ENCODE measurements at regions of chr21 and their contacts with region 1.

Region 1: DNA sequence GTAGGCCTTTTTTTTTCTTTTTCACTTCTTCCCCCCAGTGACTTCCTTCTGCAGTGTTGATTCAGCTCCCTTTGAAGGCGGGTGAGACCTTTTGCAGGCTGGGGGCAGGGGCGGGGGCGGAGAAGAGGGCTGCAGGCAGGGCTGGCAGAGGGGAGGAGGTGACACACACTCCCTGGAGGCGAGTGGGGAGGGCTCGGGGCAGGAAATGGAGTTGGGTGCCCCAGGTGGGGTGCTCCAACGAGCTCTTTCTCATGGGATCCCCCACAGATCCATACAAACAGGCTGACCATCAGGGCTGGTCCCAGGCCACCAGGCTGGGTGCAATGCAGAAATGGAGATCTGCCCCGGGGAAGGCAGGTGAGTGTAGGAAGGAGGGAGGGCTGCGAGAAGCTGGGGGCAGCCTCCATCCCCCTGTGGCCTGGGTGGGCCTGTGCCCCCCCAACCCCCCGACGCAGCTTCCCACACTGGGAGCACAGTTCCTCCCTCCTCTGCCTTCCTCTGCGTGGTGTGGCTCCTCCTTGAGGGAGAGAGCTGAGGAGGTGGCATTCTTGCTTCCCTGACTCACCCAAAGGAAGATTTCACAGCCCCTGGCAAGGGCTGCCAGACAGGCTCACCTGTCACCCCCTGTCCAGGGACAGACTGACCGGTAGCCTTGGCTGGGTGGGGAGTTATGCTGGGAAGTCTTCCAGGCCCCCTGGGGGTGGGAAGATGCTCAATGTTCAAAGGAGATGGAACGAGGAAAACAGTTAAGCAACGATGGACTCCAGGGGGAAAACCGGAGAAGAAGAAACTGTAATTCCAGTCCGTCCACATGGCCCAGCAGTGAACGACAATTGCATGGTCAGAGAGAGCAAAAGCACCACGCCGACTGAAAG is 7.1 kb upstream of the ITGB2 start:
- DNase-seq: peak; percentile 96
- H3K4me3 Mint-ChIP-seq: peak overlapping the region; percentile 85
- H3K27ac Mint-ChIP-seq: peak overlapping the region; percentile 96
- H3K4me1 Mint-ChIP-seq: peaks cover 74% of the 10 kb centered on the region
- H3K27me3 Mint-ChIP-seq: no peaks in the 10 kb centered on the region

Region 2: GRCh38 chr21:44817506-44817880 is 110.3 kb before region 1 on chr21:
- CTCF ChIA-PET with region 1: interaction called, 3 read pairs
- POLR2A ChIA-PET with region 1: no interaction called
- intact Hi-C with region 1: loop called (anchors 5 kb)
- DNase-seq: peak; percentile 95
- H3K4me3 Mint-ChIP-seq: peak overlapping the region; percentile 72
- H3K27ac Mint-ChIP-seq: peak overlapping the region; percentile 33
- H3K4me1 Mint-ChIP-seq: peaks cover 11% of the 10 kb centered on the region
- H3K27me3 Mint-ChIP-seq: no peaks in the 10 kb centered on the region

Region 3: GRCh38 chr21:44892536-44893277 is 35.1 kb before region 1 on chr21:
- CTCF ChIA-PET with region 1: interaction called, 76 read pairs
- POLR2A ChIA-PET with region 1: interaction called, 9 read pairs
- intact Hi-C with region 1: loop called (anchors 1 kb)
- DNase-seq: peak; percentile 86
- H3K4me3 Mint-ChIP-seq: no peak overlapping the region
- H3K27ac Mint-ChIP-seq: peak overlapping the region; percentile 54
- H3K4me1 Mint-ChIP-seq: peaks cover 13% of the 10 kb centered on the region
- H3K27me3 Mint-ChIP-seq: no peaks in the 10 kb centered on the region

Region 4: DNA sequence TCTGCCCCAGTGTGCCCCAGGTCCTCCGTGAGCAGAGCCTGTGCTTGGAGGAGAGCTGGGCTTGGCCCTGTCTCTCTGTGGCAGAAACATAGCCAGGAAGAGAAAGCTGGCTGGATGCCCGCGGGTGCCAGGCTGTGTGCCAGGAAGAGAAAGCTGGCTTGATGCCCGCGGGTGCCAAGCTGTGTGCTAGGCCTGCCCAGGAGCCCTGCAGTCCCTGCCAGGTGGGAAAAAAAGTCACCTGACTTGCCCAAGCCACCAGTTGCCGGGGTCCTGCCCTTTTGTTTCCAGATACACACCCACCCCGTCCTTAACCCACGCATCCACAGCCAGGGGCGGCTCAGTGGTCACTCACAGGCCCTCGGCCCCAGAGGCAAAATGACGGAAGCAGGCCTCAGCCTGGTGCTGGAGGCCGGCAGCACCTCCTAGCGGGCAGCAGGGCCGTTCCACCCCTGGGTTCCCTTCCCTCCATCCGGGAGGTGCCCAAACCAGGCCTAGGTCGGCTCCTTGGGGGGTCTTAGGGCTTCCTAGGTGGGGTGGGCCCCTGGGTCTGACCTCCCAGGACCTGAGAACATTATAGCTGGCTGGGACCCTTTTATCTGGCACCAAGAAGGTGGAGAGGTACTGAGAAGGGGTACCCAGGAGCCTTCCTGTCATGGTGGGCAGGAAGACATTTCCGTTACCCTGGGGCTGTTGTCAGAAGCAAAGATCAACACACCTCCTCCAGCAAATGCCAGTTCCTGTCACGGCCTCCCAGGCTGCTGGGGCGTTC is 16.3 kb before region 1 on chr21:
- CTCF ChIA-PET with region 1: interaction called, 42 read pairs
- POLR2A ChIA-PET with region 1: interaction called, 36 read pairs
- intact Hi-C with region 1: loop called (anchors 1 kb)
- DNase-seq: peak; percentile 75
- H3K4me3 Mint-ChIP-seq: peak overlapping the region; percentile 58
- H3K27ac Mint-ChIP-seq: peak overlapping the region; percentile 93
- H3K4me1 Mint-ChIP-seq: peaks cover 60% of the 10 kb centered on the region
- H3K27me3 Mint-ChIP-seq: no peaks in the 10 kb centered on the region

Region 5: GRCh38 chr21:44939532-44940115 is 11.8 kb after region 1 on chr21 and contains the start of gene SLX9:
- CTCF ChIA-PET with region 1: interaction called, 6 read pairs
- POLR2A ChIA-PET with region 1: interaction called, 13 read pairs
- intact Hi-C with region 1: no loop called
- DNase-seq: peak; percentile 88
- H3K4me3 Mint-ChIP-seq: peak within 1 kb of the TSS; percentile 82
- H3K27ac Mint-ChIP-seq: peak within 1 kb of the TSS; percentile 79
- H3K4me1 Mint-ChIP-seq: peaks cover 36% of the 10 kb centered on the region
- H3K27me3 Mint-ChIP-seq: no peaks in the 10 kb centered on the region
- total RNA-seq, gene SLX9: 60.7 to 64.6 TPM

Region 6: DNA sequence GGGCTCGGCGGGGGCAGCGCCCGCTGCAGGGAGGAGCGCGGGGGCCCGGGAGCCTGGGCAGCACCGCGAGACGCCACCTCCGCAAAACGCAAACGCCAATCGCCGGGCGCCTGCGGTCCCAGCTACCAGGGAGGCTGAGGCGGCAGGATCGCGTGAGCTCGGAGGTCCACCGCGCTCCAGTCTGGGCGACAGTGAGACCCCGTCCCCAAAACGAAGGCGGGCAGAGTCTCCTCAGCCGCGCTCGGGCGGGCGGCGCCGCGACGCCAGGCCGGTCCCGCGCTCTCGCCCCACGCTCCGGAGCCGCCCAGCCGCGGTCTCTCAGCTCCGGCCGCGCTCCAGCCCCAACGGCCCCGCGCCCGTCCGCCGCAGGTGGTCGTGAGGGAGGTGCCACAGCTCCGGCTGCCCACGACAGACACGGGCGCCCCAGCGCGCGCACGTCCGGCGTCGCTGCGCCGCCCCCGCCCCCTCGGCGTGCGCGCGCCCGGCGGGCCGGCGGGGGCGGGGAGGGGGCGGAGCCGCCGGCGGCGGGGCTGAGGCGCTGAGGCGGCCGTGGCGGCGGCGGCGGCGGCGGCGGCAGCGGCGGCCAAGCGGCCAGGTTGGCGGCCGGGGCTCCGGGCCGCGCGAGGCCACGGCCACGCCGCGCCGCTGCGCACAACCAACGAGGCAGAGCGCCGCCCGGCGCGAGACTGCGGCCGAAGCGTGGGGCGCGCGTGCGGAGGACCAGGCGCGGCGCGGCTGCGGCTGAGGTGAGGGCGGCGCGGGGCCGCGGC is 146.4 kb after region 1 on chr21 and contains the start of gene ADARB1:
- CTCF ChIA-PET with region 1: no interaction called
- POLR2A ChIA-PET with region 1: interaction called, 4 read pairs
- intact Hi-C with region 1: loop called (anchors 2 kb)
- DNase-seq: peak; percentile 64
- H3K4me3 Mint-ChIP-seq: peak within 1 kb of the TSS; percentile 84
- H3K27ac Mint-ChIP-seq: peak within 1 kb of the TSS; percentile 75
- H3K4me1 Mint-ChIP-seq: peaks cover 43% of the 10 kb centered on the region
- H3K27me3 Mint-ChIP-seq: no peaks in the 10 kb centered on the region
- total RNA-seq, gene ADARB1: 37.6 to 40.6 TPM

Region 7: GRCh38 chr21:45643021-45643980 is 715.5 kb after region 1 on chr21 and contains the start of gene PCBP3:
- CTCF ChIA-PET with region 1: no interaction called
- POLR2A ChIA-PET with region 1: no interaction called
- intact Hi-C with region 1: loop called (anchors 10 kb)
- DNase-seq: peak; percentile 98
- H3K4me3 Mint-ChIP-seq: peak within 1 kb of the TSS; percentile 71
- H3K27ac Mint-ChIP-seq: peak within 1 kb of the TSS; percentile 49
- H3K4me1 Mint-ChIP-seq: peaks cover 25% of the 10 kb centered on the region
- H3K27me3 Mint-ChIP-seq: peaks cover 18% of the 10 kb centered on the region
- total RNA-seq, gene PCBP3: 5.3 to 6.6 TPM

Measured in activated CD4-positive, alpha-beta memory T cell treated with anti-CD3 and anti-CD28 coated beads for 36 hours (primary cell).